ENCODE measurements at regions of chr20 and their contacts with region 1.

Region 1: DNA sequence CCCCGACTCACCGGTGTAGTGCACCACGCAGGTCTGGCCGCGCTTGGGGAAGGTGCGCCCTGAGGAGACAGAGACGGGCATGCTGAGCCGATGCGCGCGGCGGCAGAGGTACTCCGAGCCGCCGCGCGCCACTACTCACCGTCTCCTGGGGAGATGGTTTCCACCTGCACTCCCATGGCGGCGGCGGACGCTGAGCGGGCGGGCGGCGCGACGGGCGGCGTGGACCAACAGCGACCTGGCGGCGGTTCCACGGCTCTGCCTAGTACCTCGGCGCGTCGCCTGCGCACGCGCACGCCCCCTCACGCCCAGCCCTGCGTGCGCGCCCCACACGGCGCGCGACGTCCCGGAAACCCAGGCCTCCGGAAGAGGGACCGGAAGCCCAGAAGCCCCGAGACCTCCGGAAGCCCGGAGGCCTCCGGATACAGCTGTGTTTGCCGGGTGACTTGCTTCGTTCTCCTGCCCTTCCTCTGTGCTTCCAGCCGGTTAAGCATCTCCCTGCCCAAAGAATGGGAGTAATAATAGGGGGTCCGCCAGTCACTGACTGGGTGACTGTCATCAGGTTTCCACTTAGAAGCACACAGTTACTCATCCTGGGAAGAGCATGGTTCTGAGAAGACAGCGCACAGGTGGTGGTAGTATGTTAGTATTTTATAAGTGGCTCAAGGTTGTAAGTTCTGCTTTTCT is at the start of gene FKBP1A:
- DNase-seq: peak; percentile 94 to 97
- ATAC-seq: peak; percentile 97
- H3K4me3 ChIP-seq: peak within 1 kb of the TSS; percentile 87 to 89
- H3K27ac ChIP-seq: peak within 1 kb of the TSS in 1 of 2 donors; percentile 78
- H3K4me1 ChIP-seq: peaks cover 3 to 4% of the 10 kb centered on the region in 2 donors
- H3K27me3 ChIP-seq: no peaks in the 10 kb centered on the region
- total RNA-seq, gene FKBP1A: 249 to 273 TPM

Region 2: GRCh38 chr20:1118336-1119127 is 274.4 kb before region 1 on chr20 and contains the start of gene PSMF1:
- intact Hi-C with region 1: loop called in 1 of 2 experiments (anchors 5 kb)
- DNase-seq: peak; percentile 97 to 98
- ATAC-seq: peak; percentile 99
- H3K4me3 ChIP-seq: peak within 1 kb of the TSS; percentile 59 to 73
- H3K27ac ChIP-seq: no peak within 1 kb of the TSS
- H3K4me1 ChIP-seq: no peaks in the 10 kb centered on the region
- H3K27me3 ChIP-seq: no peaks in the 10 kb centered on the region
- total RNA-seq, gene PSMF1: 96.9 to 105 TPM

Region 3: DNA sequence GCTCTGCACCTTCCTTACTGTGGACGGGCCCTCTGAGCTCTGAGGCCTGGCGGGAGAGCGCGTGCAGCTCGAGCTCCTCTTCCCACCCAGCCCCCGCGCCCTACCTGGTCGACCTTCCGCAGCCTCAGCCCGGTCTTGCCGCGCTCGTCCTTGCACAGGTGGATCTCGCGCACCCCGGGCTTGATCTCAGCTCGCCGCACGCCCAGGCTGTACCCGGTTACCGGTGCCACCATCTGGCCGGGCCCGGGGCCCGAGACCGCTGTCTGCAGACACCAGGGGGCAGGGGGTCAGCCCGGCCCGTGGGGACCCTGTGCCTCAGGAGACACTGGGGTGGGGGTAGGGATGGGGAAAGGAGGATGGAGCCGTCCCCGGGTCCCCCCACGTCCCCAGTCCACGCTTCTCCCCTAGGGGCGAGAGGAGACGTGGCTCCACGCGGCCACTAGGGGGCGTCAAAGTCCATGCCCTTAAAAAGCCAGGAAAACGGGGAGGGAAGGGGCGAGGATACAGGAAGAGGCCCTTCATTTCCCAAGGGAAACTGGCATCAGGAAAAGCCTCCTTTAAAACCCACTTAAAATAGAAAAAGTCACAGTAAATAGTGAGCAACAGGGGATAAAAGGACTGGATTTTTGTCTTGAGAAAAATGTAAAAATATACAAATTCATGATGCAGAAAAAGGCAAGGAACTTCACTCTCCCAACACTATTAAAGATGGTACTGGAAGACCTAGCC is 79.6 kb before region 1 on chr20:
- intact Hi-C with region 1: loop called in 1 of 2 experiments (anchors 2 kb)
- DNase-seq: peak; percentile 80 to 92
- ATAC-seq: peak; percentile 83
- H3K4me3 ChIP-seq: no peak overlapping the region
- H3K27ac ChIP-seq: no peak overlapping the region
- H3K4me1 ChIP-seq: no peaks in the 10 kb centered on the region
- H3K27me3 ChIP-seq: no peaks in the 10 kb centered on the region

Region 4: GRCh38 chr20:1325173-1326030 is 67.6 kb before region 1 on chr20:
- intact Hi-C with region 1: loop called (anchors 2 kb)
- DNase-seq: peak; percentile 99 to 100
- ATAC-seq: peak; percentile 97
- H3K4me3 ChIP-seq: peak overlapping the region; percentile 74 to 95
- H3K27ac ChIP-seq: peak overlapping the region; percentile 62 to 94
- H3K4me1 ChIP-seq: no peaks in the 10 kb centered on the region
- H3K27me3 ChIP-seq: no peaks in the 10 kb centered on the region

Region 5: DNA sequence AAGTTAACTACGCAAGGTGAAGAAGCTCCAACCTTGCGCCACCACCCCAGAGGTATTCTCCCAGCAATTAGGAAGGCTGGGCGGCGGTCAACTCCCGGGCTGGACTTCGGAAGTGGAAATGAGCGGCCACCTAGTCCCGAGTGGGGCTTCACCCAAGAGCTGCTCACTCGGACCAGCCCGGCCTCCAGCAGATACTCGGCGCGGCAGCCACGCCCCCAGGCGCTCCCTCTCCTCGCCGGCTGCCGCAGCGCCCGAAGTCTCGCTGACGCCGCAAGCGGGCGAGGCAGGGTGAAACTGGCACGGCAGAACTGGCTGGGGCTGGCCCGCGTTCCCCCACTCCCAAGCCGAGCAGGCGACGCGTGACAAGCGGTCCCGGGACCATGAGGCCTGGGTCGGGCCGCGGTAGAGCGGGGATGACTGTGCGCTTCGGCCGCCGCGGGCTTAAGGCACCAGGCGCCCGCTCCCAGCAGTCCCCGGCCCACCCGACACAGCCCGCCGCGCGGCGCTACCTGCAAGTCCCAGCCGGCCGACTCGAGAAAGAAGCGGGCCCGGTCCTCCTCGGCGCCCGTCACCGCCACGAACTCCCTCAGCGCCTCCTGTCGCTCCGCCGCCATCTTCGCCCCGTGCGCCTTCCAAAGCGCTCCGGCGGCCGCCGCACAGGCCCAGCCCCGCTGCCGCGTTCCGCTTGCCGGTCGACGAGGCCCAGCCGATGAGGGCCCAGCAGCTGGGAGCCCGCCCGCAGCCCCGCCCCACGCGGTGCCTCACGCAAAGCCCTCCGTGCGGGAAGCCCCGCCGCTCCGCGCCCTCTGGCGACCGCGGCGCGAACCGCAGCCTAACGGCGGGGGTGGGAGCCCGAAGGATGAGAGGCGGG is 73.5 kb after region 1 on chr20 and contains the start of gene NSFL1C:
- intact Hi-C with region 1: loop called (anchors 2 to 5 kb)
- DNase-seq: peak; percentile 98 to 99
- ATAC-seq: peak; percentile 99
- H3K4me3 ChIP-seq: peak within 1 kb of the TSS; percentile 31 to 96
- H3K27ac ChIP-seq: peak within 1 kb of the TSS; percentile 1 to 23
- H3K4me1 ChIP-seq: peaks cover 0 to 3% of the 10 kb centered on the region in 2 donors
- H3K27me3 ChIP-seq: no peaks in the 10 kb centered on the region
- total RNA-seq, gene NSFL1C: 61.3 to 71.3 TPM